Caco-2 (cell line): ENCODE measurements at regions of chr12 and their contacts with region 1.

Region 1: DNA sequence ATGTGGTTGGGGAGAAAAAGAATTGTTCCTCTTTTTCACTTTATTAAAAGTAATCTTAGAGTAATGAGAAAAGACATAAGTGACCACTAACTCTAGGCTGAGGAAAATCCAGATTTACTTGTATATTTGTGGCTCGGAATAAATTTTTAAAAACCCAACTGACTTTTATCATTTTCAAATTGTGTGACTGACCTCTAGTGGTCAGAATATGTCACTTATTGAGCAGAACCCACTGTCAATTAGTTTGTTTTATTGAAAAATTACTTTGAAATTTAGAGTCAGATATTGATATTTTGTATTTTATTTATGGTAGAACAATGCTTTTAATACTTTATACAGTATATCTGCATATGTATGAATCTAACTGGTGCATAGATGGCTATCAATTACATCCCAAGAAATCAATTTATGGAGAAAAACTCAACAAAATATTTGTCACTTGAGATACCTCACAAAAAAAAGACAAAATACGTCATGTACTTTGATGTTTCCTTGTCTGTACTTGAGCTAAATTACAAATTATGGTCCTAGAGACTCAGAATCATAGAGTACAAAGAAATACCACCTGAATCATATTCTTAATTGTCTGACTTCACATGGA is 229.4 kb downstream of the CNTN1 start:
- DNase-seq: no peak
- H3K4me3 ChIP-seq: no peak overlapping the region
- H3K4me3 Mint-ChIP-seq: no peak overlapping the region
- H3K27ac Mint-ChIP-seq: no peak overlapping the region
- H3K4me1 ChIP-seq: no peaks in the 10 kb centered on the region
- H3K4me1 Mint-ChIP-seq: no peaks in the 10 kb centered on the region
- H3K27me3 ChIP-seq: no peaks in the 10 kb centered on the region
- H3K27me3 Mint-ChIP-seq: peaks cover 9% of the 10 kb centered on the region
- CTCF ChIP-seq: peak; percentile 61 to 67

Region 2: GRCh38 chr12:40325349-40325960 is 596.2 kb before region 1 on chr12:
- CTCF ChIA-PET with region 1: no interaction called
- POLR2A ChIA-PET with region 1: no interaction called
- intact Hi-C with region 1: loop called (anchors 5 kb)
- DNase-seq: peak; percentile 34 to 40
- H3K4me3 ChIP-seq: no peak overlapping the region
- H3K4me3 Mint-ChIP-seq: no peak overlapping the region
- H3K27ac Mint-ChIP-seq: no peak overlapping the region
- H3K4me1 ChIP-seq: peaks cover 6% of the 10 kb centered on the region
- H3K4me1 Mint-ChIP-seq: no peaks in the 10 kb centered on the region
- H3K27me3 ChIP-seq: no peaks in the 10 kb centered on the region
- H3K27me3 Mint-ChIP-seq: peaks cover 3% of the 10 kb centered on the region
- CTCF ChIP-seq: peak; percentile 39 to 82

Region 3: DNA sequence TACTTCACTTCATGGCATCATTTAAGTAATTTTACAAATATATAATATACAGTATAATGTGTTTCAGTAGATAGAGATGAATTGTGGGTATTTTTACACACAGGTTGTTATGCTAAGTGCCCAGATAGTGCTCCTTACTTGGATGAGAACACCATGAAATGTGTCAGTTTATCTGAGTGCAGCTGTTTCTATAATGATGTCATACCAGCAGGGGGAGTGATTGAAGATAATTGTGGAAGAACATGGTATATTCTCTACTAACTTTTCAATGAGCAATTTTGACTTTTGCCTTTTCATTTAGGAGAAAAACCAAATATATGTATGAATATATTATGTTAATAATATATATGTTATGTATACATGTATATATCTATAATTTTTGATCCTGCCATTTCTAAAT is 475.3 kb before region 1 on chr12:
- CTCF ChIA-PET with region 1: no interaction called
- POLR2A ChIA-PET with region 1: no interaction called
- intact Hi-C with region 1: loop called (anchors 1 kb)
- DNase-seq: peak in 1 of 2 experiments; percentile 43
- H3K4me3 ChIP-seq: no peak overlapping the region
- H3K4me3 Mint-ChIP-seq: no peak overlapping the region
- H3K27ac Mint-ChIP-seq: no peak overlapping the region
- H3K4me1 ChIP-seq: no peaks in the 10 kb centered on the region
- H3K4me1 Mint-ChIP-seq: no peaks in the 10 kb centered on the region
- H3K27me3 ChIP-seq: no peaks in the 10 kb centered on the region; the same call in 1 of the 2 replicates
- H3K27me3 Mint-ChIP-seq: peaks cover 4% of the 10 kb centered on the region
- CTCF ChIP-seq: peak; percentile 38 to 62

Region 4: DNA sequence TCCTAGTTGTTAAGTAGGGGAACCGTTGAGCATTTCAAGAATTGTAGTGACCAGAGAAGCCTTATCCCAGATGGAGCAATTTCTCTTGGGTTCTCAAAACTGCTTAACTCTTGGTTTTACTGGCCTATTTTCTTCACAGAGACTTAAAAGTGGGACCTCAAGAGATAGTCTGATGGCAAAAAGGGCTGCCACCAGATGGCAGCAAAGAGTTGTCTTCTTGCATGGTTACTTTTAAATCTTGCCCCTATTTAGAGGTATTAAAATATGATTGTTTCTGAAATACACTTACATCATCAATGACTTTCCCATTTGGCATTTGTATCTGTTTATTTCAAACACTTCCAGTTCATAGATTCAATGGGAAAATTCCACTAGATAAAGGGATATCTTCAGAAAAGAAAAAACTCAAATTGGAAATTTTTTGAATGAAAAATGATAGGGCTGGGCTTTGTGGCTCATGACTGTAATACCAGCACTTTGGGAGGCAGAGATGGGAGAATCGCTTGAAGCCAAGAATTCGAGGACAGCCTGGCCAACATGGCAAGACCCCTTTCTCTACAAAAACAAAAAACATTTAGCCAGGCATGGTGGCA is 299.3 kb before region 1 on chr12:
- CTCF ChIA-PET with region 1: no interaction called
- POLR2A ChIA-PET with region 1: no interaction called
- intact Hi-C with region 1: loop called (anchors 1 kb)
- DNase-seq: peak in 1 of 2 experiments; percentile 56
- H3K4me3 ChIP-seq: no peak overlapping the region
- H3K4me3 Mint-ChIP-seq: no peak overlapping the region
- H3K27ac Mint-ChIP-seq: no peak overlapping the region
- H3K4me1 ChIP-seq: no peaks in the 10 kb centered on the region
- H3K4me1 Mint-ChIP-seq: no peaks in the 10 kb centered on the region
- H3K27me3 ChIP-seq: no peaks in the 10 kb centered on the region
- H3K27me3 Mint-ChIP-seq: peaks cover 4% of the 10 kb centered on the region
- CTCF ChIP-seq: peak; percentile 77 to 85

Region 5: DNA sequence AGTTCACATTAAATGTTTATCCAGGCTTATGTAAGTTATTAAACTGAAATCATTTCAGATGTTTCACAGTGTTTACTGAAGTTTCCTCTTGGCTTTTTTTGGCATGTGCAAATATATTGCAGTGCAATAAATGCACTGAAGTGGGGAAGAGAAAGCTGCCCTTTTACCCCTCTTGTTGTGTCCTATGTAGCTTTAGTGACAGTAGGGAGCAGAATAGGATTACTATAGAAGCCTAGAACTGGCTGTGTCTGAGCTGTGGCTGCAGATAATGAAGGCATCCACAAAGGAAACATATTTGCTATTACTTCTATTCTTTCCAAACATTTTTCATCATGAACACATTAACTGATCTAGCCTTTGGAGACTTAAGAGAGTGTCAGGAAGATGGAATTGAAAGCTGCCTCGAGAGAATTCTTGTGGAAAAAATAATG is 253.5 kb before region 1 on chr12:
- CTCF ChIA-PET with region 1: no interaction called
- POLR2A ChIA-PET with region 1: no interaction called
- intact Hi-C with region 1: loop called (anchors 1 kb)
- DNase-seq: no peak
- H3K4me3 ChIP-seq: no peak overlapping the region
- H3K4me3 Mint-ChIP-seq: no peak overlapping the region
- H3K27ac Mint-ChIP-seq: no peak overlapping the region
- H3K4me1 ChIP-seq: no peaks in the 10 kb centered on the region
- H3K4me1 Mint-ChIP-seq: no peaks in the 10 kb centered on the region
- H3K27me3 ChIP-seq: no peaks in the 10 kb centered on the region
- H3K27me3 Mint-ChIP-seq: no peaks in the 10 kb centered on the region
- CTCF ChIP-seq: no peak

Region 6: GRCh38 chr12:40745386-40745785 is 176.3 kb before region 1 on chr12:
- CTCF ChIA-PET with region 1: no interaction called
- POLR2A ChIA-PET with region 1: no interaction called
- intact Hi-C with region 1: loop called (anchors 1 kb)
- DNase-seq: no peak
- H3K4me3 ChIP-seq: no peak overlapping the region
- H3K4me3 Mint-ChIP-seq: no peak overlapping the region
- H3K27ac Mint-ChIP-seq: no peak overlapping the region
- H3K4me1 ChIP-seq: no peaks in the 10 kb centered on the region
- H3K4me1 Mint-ChIP-seq: no peaks in the 10 kb centered on the region
- H3K27me3 ChIP-seq: no peaks in the 10 kb centered on the region
- H3K27me3 Mint-ChIP-seq: no peaks in the 10 kb centered on the region
- CTCF ChIP-seq: no peak

Region 7: DNA sequence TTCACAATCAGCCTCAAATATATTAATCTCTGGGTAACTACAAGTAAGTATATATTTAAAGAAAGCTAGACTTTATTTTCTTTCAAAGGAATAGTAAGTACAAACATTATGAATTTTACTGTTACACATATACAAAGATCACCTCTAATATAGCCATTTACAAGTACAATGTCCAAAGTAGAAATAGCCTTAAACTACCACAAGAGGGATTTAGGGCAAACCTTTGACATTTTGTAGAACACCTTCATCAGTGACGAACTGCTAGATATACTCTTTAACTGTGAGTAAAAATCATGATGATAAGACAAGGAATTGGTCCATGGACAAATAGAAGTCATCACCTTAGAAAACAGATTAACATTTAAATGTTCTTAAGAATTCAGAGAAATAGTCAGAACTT is 159.6 kb before region 1 on chr12:
- CTCF ChIA-PET with region 1: no interaction called
- POLR2A ChIA-PET with region 1: no interaction called
- intact Hi-C with region 1: loop called (anchors 1 kb)
- DNase-seq: no peak
- H3K4me3 ChIP-seq: no peak overlapping the region
- H3K4me3 Mint-ChIP-seq: no peak overlapping the region
- H3K27ac Mint-ChIP-seq: no peak overlapping the region
- H3K4me1 ChIP-seq: no peaks in the 10 kb centered on the region
- H3K4me1 Mint-ChIP-seq: no peaks in the 10 kb centered on the region
- H3K27me3 ChIP-seq: no peaks in the 10 kb centered on the region; the same call in 1 of the 2 replicates
- H3K27me3 Mint-ChIP-seq: peaks cover 2% of the 10 kb centered on the region
- CTCF ChIP-seq: no peak